ENCODE measurements at regions of chr1 and their contacts with region 1.

Region 1: DNA sequence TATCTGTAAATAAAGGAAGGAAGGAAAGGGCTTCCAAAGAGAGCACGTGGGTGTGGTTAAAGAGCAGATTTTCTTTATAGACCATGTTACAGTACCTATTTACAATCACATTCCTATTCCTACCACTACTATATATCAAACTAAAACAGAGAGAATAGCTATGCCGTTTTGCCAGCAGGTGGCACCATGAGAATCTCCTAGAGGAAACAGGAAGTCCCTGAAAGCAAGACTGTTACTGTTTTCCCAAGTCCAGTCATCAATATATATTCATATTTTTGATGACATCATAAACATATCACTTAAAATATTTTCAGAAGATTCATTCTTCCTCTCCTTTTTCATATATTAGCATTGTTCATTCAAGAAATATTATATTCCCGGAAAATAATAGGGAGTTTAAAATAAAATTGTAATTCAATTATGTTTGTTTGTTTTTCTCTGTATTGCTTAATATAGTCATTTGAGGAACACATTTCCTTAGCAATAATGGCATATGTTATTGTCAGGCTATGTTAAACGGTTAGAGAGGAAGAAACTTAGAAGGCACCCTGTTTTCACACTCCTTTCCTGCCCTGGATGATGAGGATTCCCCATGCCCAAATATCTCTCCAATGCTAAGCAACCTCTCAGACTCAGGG is 6.6 kb downstream of the CCDC190 start:
- DNase-seq: peak; percentile 64 to 68
- H3K4me3 ChIP-seq: no peak overlapping the region
- H3K4me3 Mint-ChIP-seq: no peak overlapping the region
- H3K27ac Mint-ChIP-seq: no peak overlapping the region
- H3K4me1 ChIP-seq: no peaks in the 10 kb centered on the region
- H3K4me1 Mint-ChIP-seq: no peaks in the 10 kb centered on the region
- H3K27me3 ChIP-seq: no peaks in the 10 kb centered on the region
- H3K27me3 Mint-ChIP-seq: peaks cover 3% of the 10 kb centered on the region
- CTCF ChIP-seq: peak; percentile 52 to 78

Region 2: DNA sequence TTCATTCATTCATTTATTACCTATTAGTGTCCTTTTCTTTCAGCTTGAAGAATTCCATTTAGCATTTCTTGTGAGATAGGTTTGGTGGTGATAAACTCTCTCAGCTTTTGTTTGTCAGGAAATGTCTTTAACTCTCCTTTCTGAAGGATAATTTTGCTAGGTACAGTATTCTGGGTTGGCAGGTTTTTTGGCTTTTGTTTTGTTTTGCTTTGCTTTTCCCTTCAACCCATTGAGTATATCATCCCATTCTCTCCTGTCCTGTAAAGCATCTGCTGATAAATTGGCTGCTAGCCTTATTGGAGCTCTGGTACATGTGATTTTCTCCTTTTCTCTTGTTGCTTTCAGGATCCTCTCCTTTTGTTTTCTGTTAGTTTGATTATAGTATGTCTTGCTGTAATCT is 167.8 kb after region 1 on chr1:
- CTCF ChIA-PET with region 1: no interaction called
- POLR2A ChIA-PET with region 1: no interaction called
- intact Hi-C with region 1: loop called (anchors 1 kb)
- DNase-seq: no peak
- H3K4me3 ChIP-seq: no peak overlapping the region
- H3K4me3 Mint-ChIP-seq: no peak overlapping the region
- H3K27ac Mint-ChIP-seq: no peak overlapping the region
- H3K4me1 ChIP-seq: no peaks in the 10 kb centered on the region
- H3K4me1 Mint-ChIP-seq: no peaks in the 10 kb centered on the region
- H3K27me3 ChIP-seq: no peaks in the 10 kb centered on the region
- H3K27me3 Mint-ChIP-seq: peaks cover 5% of the 10 kb centered on the region
- CTCF ChIP-seq: no peak

Region 3: DNA sequence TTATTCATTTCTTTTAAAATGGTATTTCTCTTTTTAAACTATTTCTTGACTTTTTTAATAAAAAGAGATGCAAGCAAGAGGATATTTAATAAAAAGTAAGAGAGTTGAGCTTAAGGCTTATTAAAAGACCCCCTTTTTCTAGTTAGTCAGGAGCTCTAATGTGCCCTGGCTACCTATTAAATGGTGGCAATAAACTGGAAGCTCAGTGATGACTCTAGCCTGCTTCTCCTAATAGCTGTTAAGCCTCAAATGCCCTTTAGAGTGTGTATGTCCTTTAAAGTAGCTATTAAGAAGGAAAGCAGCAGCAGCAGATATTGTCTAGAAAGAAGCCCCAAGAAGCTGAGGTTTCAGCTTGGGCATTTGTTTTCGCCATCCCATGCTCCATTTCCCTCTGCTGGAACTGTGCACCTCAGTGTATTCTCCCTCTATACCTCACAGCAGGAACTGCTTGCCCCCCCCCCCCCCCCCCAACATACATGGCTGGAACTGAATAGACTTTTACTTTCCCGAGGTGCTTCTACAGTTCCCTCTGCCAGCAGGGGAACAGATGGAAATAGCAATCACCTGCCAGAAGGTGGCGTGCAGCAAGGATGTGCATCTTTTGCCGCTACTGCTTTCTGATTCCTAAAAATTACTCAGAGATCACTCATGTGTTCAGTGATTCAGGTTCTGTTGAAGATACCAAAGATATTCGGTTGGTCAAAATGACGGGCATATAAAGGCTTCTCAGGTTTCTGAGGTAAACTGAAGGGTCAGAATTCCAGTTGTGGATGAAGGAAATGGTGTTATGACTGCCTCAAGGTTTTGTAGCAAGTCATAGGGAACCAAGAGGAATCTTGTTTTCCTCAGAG is 217.3 kb after region 1 on chr1:
- CTCF ChIA-PET with region 1: interaction called, 17 read pairs
- POLR2A ChIA-PET with region 1: no interaction called
- intact Hi-C with region 1: loop called (anchors 1 kb)
- DNase-seq: peak; percentile 67 to 69
- H3K4me3 ChIP-seq: no peak overlapping the region
- H3K4me3 Mint-ChIP-seq: no peak overlapping the region
- H3K27ac Mint-ChIP-seq: no peak overlapping the region
- H3K4me1 ChIP-seq: peaks cover 3% of the 10 kb centered on the region; the same call in 1 of the 2 replicates
- H3K4me1 Mint-ChIP-seq: no peaks in the 10 kb centered on the region
- H3K27me3 ChIP-seq: no peaks in the 10 kb centered on the region
- H3K27me3 Mint-ChIP-seq: peaks cover 13% of the 10 kb centered on the region
- CTCF ChIP-seq: peak; percentile 69 to 82

Region 4: DNA sequence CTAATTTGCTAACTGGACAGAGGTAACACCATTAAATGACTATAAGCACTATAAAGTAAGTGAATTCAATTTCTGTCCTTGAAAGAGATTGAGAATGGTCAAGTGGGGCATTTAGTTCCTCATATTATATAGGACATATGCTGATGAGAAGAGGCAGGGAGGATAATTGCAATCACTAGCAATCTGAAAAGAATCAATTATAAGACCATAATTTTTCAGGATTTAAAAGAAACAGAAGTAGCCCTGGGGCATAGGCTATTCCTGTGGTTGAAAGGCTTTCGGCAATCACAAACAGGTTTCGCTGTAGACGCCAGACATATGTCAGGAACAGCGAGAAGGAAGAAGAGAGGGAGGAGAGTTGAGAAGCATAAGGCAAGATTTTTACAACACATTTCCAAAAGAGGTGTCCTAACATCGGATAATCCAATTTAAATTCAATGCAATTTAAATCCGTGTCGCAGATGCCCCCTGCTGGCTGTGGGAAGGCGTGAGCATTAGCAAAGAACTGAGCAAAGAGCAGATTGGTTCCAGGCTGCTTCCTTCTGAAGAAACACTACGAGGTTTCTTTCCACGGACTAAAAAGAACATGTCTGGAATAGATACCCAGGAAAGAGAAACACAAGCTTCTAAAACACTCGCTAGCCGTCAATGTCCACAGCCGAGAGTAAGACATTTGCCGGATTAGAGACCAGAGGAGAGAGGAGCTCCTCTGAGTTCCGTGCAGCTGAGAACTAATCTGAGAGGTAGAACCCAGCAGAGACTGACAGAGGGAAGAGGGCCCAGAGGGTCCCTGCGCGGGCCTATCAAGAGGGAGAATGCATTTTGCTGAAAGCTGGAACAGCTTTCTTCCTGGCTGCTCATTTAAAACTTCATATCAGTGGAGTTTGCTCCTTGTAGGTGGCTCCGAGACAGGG is 320.4 kb after region 1 on chr1:
- CTCF ChIA-PET with region 1: interaction called, 5 read pairs
- POLR2A ChIA-PET with region 1: no interaction called
- intact Hi-C with region 1: loop called (anchors 1 kb)
- DNase-seq: peak; percentile 34 to 55
- H3K4me3 ChIP-seq: no peak overlapping the region
- H3K4me3 Mint-ChIP-seq: no peak overlapping the region
- H3K27ac Mint-ChIP-seq: no peak overlapping the region
- H3K4me1 ChIP-seq: no peaks in the 10 kb centered on the region
- H3K4me1 Mint-ChIP-seq: no peaks in the 10 kb centered on the region
- H3K27me3 ChIP-seq: no peaks in the 10 kb centered on the region
- H3K27me3 Mint-ChIP-seq: peaks cover 3% of the 10 kb centered on the region
- CTCF ChIP-seq: peak; percentile 82 to 84

Measured in Caco-2 (cell line).